Heart right ventricle (tissue), 16 donors: ENCODE measurements at regions of chr9 and their contacts with region 1.

Region 1: GRCh38 chr9:34701769-34702736 is 7.9 kb downstream of the CCL21 start:
- DNase-seq: peak; percentile 87 to 88
- ATAC-seq: peak; percentile 89 to 96 (median 92)
- H3K4me3 ChIP-seq: peak overlapping the region; percentile 30 to 94 (median 68)
- H3K27ac ChIP-seq: peak overlapping the region; percentile 5 to 85 (median 76)
- H3K4me1 ChIP-seq: peaks cover 0 to 17% (median 5%) of the 10 kb centered on the region in 9 donors
- H3K27me3 ChIP-seq: peaks cover 0 to 8% (median 0%) of the 10 kb centered on the region in 7 donors
- CTCF ChIP-seq: peak; percentile 94 to 99 (median 99)

Region 2: DNA sequence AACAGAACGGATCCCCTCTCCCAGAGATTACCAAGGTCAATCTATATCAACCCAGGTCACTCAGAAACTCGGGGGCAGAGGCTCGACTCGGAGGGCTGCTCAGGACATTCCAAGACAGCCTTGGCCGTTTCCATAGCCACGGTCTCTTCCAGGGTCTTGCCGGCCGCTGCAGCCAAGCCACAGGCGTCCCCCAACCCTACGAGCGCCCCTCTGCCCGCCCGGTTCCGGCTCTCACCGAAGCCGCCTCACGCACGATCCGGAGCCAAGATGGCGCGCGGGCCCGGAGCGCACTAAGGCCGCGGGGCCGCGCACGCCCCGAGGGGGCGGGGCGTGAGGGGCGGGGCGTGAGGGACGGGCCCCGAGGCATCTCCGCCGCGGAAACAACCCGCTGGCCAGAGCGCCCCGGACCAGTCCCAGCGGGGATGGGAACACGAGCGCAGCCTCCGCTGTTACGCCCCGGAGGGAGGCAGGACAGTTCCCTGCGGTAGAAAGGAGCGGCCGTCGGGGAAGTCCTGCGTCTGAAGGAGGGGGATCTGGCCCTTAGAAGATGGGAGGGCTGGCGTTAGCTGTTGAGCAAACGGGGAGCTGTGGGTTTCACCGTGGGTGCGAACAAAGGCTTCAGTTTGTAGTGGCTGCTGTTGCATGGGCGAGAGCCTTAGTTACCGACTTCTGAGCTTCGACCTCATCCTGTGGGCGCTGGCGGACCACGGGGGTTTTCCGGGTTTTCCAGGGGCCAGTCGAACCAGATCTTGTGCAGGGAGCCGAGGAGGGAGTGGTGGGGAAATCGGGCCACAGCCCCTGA is 90.0 kb before region 1 on chr9 and contains the start of gene RPP25L:
- intact Hi-C with region 1: loop called in 2 of 10 experiments (anchors 5 kb)
- DNase-seq: peak; percentile 88 to 93
- ATAC-seq: peak; percentile 95 to 99 (median 97)
- H3K4me3 ChIP-seq: peak within 1 kb of the TSS; percentile 34 to 86 (median 79)
- H3K27ac ChIP-seq: peak within 1 kb of the TSS; percentile 71 to 98 (median 92)
- H3K4me1 ChIP-seq: peaks cover 2 to 31% (median 25%) of the 10 kb centered on the region in 9 donors
- H3K27me3 ChIP-seq: no peaks in the 10 kb centered on the region
- CTCF ChIP-seq: no peak
- total RNA-seq, gene RPP25L: 29.2 to 48.5 (median 39.2) TPM

Region 3: DNA sequence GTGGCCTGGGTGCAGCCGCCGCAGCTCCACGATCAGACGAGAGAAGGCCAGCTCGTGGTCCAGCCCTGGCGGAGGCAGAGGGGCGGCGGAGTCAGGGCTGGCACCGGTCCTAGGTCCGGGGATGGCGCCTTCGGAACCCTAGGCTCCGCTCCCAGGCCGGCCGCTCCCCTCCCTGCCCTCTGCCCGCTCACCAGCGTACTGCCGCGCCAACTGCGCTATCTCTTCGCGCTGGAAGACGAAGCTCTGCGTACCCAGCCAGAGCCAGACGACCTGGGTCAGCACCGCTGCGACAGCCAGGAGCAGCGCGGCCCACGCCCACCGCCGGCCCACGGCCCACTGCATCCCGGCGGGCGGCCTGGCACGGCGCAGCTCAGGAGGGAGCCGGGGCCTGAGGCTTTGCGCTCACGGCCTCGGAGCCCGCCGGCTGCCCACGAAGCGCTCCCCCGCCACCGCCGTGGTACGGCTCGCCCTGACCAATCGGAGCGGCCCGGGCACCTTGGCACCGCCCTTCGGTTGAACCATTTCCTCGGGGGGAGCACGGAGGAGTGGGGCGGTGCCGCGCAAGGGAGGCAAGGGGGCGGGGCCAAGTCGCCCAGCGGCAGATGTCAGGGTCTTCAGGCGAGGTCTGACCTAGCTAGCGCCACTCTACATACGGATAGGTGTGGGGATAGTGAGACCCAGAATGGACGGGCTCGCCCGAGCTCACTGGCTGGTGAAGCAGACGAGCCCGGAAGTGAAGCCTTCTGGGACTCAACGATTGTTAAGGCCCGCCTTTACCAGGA is 64.5 kb before region 1 on chr9 and contains the start of gene SIGMAR1:
- intact Hi-C with region 1: no loop called
- DNase-seq: peak; percentile 94 to 95
- ATAC-seq: peak; percentile 95 to 97 (median 96)
- H3K4me3 ChIP-seq: peak within 1 kb of the TSS; percentile 67 to 88 (median 76)
- H3K27ac ChIP-seq: peak within 1 kb of the TSS; percentile 66 to 96 (median 88)
- H3K4me1 ChIP-seq: peaks cover 5 to 38% (median 27%) of the 10 kb centered on the region in 9 donors
- H3K27me3 ChIP-seq: no peaks in the 10 kb centered on the region
- CTCF ChIP-seq: peak in 1 of 9 donors; percentile 5
- total RNA-seq, gene SIGMAR1: 15.8 to 31.7 (median 22.3) TPM

Region 4: GRCh38 chr9:34665381-34666250 is 36.4 kb before region 1 on chr9:
- intact Hi-C with region 1: loop called in 4 of 10 experiments (anchors 2 to 5 kb)
- DNase-seq: peak; percentile 95 to 96
- ATAC-seq: peak; percentile 90 to 95 (median 92)
- H3K4me3 ChIP-seq: peak overlapping the region; percentile 45 to 95 (median 72)
- H3K27ac ChIP-seq: peak overlapping the region; percentile 77 to 100 (median 97)
- H3K4me1 ChIP-seq: peaks cover 0 to 29% (median 14%) of the 10 kb centered on the region in 9 donors
- H3K27me3 ChIP-seq: no peaks in the 10 kb centered on the region
- CTCF ChIP-seq: no peak

Region 5: GRCh38 chr9:34744295-34745221 is 42.5 kb after region 1 on chr9:
- intact Hi-C with region 1: no loop called
- DNase-seq: peak in 1 of 2 donors; percentile 32
- ATAC-seq: peak; percentile 44 to 95 (median 76)
- H3K4me3 ChIP-seq: no peak overlapping the region
- H3K27ac ChIP-seq: no peak overlapping the region
- H3K4me1 ChIP-seq: peaks cover 0 to 10% (median 0%) of the 10 kb centered on the region in 9 donors
- H3K27me3 ChIP-seq: peaks cover 0 to 5% (median 0%) of the 10 kb centered on the region in 7 donors
- CTCF ChIP-seq: no peak

Region 6: GRCh38 chr9:34759432-34760134 is 57.5 kb after region 1 on chr9:
- intact Hi-C with region 1: loop called in 1 of 10 experiments (anchors 10 kb)
- DNase-seq: no peak
- ATAC-seq: peak in 4 of 8 donors; percentile 53 to 72 (median 60)
- H3K4me3 ChIP-seq: no peak overlapping the region
- H3K27ac ChIP-seq: no peak overlapping the region
- H3K4me1 ChIP-seq: peaks cover 0 to 5% (median 0%) of the 10 kb centered on the region in 9 donors
- H3K27me3 ChIP-seq: peaks cover 0 to 8% (median 0%) of the 10 kb centered on the region in 7 donors
- CTCF ChIP-seq: no peak

Region 7: GRCh38 chr9:34869390-34869789 is 167.3 kb after region 1 on chr9:
- intact Hi-C with region 1: loop called in 1 of 10 experiments (anchors 10 kb)
- DNase-seq: no peak
- ATAC-seq: no peak
- H3K4me3 ChIP-seq: no peak overlapping the region
- H3K27ac ChIP-seq: no peak overlapping the region
- H3K4me1 ChIP-seq: peaks cover 0 to 11% (median 0%) of the 10 kb centered on the region in 9 donors
- H3K27me3 ChIP-seq: peaks cover 0 to 2% (median 0%) of the 10 kb centered on the region in 7 donors
- CTCF ChIP-seq: peak in 6 of 9 donors; percentile 25 to 46 (median 39)

Region 8: GRCh38 chr9:34989003-34989945 is 287.2 kb after region 1 on chr9 and contains the start of gene DNAJB5:
- intact Hi-C with region 1: loop called in 1 of 10 experiments (anchors 10 kb)
- DNase-seq: peak; percentile 97 to 100
- ATAC-seq: peak; percentile 80 to 90 (median 84)
- H3K4me3 ChIP-seq: peak within 1 kb of the TSS; percentile 37 to 91 (median 77)
- H3K27ac ChIP-seq: peak within 1 kb of the TSS; percentile 72 to 99 (median 94)
- H3K4me1 ChIP-seq: peaks cover 19 to 62% (median 49%) of the 10 kb centered on the region in 9 donors
- H3K27me3 ChIP-seq: no peaks in the 10 kb centered on the region
- CTCF ChIP-seq: no peak
- total RNA-seq, gene DNAJB5: 49.0 to 206 (median 85.1) TPM